ENCODE measurements at regions of chr17 and their contacts with region 1.

Region 1: DNA sequence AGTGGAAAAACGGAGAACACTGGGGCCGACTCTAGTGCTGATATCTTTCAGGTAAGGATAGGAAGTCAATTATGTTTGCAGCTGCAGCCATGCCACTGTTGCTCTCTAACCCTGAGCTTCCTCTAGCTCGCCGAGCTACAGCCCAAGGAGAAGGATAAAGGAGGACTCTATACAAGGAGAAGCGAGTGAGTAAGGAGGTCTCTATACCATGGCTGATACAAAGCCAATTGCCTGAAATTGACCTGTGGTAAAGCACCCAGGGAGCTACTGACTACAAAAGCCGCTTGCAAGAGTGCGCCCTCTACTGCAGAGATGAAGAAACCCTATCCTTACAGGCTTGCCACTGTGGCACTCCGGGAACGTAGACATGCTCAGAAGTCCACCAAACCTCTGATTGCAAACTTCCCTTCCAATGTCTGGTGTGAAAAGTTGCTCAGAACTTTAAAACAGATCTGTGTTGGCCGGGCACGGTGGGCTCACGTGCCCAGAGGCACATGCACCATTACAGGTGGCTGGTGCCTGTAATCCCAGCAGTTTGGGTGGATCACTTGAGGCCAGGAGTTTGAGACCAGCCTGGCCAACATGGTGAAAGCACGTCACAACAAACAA is 10.8 kb upstream of the SLC46A1 start:
- DNase-seq: peak; percentile 70
- ATAC-seq: peak; percentile 96
- H3K4me3 Mint-ChIP-seq: no peak overlapping the region
- H3K27ac Mint-ChIP-seq: no peak overlapping the region
- H3K4me1 Mint-ChIP-seq: peaks cover 2% of the 10 kb centered on the region
- H3K27me3 Mint-ChIP-seq: peaks cover 7% of the 10 kb centered on the region

Region 2: DNA sequence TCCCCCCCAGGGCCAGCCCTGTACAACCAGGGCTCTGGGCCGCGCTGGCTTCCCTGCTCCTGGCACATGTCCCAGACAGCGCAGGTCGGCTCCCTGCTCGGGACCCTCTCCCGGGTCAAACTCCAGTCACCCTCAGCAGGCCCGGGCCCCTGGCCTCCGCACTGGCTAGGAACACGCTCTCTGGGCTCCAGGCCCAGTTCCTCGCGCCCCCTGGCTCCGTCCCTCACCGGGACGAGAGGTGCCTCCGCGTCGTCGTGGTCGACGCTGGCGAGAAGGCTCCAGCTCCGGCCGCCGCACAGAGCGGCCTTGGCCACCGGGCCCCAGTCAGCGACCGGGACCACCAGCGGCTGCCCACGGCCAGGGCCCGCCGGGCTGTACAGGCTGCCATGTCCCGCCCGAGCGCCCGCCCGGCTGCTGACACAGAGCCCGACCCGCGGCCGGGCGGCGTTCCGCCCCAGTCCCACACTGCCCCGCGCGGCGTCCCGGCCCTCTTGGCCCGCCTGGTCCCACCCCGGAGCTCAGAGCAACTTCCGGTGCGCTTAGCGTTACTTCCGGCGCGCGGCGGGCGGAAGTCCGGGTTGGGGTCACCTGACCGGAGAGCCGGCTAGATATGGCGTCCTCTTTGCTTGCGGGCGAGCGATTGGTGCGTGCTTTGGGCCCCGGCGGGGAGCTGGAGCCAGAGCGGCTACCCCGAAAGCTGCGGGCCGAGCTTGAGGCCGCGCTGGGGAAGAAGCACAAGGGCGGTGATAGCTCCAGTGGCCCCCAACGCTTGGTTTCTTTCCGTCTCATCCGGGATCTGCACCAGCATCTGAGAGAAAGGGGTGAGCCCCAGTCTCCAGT is 59.5 kb before region 1 on chr17 and contains the start of gene POLDIP2:
- CTCF ChIA-PET with region 1: interaction called, 16 read pairs
- POLR2A ChIA-PET with region 1: no interaction called
- DNase-seq: peak; percentile 97
- ATAC-seq: peak; percentile 99
- H3K4me3 Mint-ChIP-seq: peak within 1 kb of the TSS; percentile 97
- H3K27ac Mint-ChIP-seq: peak within 1 kb of the TSS; percentile 97
- H3K4me1 Mint-ChIP-seq: peaks cover 36% of the 10 kb centered on the region
- H3K27me3 Mint-ChIP-seq: no peaks in the 10 kb centered on the region
- total RNA-seq, gene POLDIP2: 68.1 to 73.9 TPM

Region 3: GRCh38 chr17:28384281-28385036 is 32.3 kb before region 1 on chr17:
- CTCF ChIA-PET with region 1: interaction called, 23 read pairs
- POLR2A ChIA-PET with region 1: no interaction called
- DNase-seq: peak; percentile 84
- ATAC-seq: peak; percentile 94
- H3K4me3 Mint-ChIP-seq: peak overlapping the region; percentile 83
- H3K27ac Mint-ChIP-seq: peak overlapping the region; percentile 82
- H3K4me1 Mint-ChIP-seq: peaks cover 23% of the 10 kb centered on the region
- H3K27me3 Mint-ChIP-seq: peaks cover 6% of the 10 kb centered on the region

Region 4: GRCh38 chr17:28405632-28406472 is 11.0 kb before region 1 on chr17 and contains the start of gene SLC46A1:
- CTCF ChIA-PET with region 1: interaction called, 24 read pairs
- POLR2A ChIA-PET with region 1: no interaction called
- DNase-seq: peak; percentile 60
- ATAC-seq: peak; percentile 84
- H3K4me3 Mint-ChIP-seq: peak within 1 kb of the TSS; percentile 72
- H3K27ac Mint-ChIP-seq: peak within 1 kb of the TSS; percentile 45
- H3K4me1 Mint-ChIP-seq: peaks cover 13% of the 10 kb centered on the region
- H3K27me3 Mint-ChIP-seq: peaks cover 15% of the 10 kb centered on the region
- total RNA-seq, gene SLC46A1: 2.7 to 3.1 TPM

Measured in activated CD8-positive, alpha-beta T cell treated with anti-CD3 and anti-CD28 coated beads, Interleukin-2, amount 10 ng/mL, durations not matched to agents 7 days and 5 days (primary cell).